PC-3 (cell line): ENCODE measurements at regions of chr1 and their contacts with region 1.

Region 1: DNA sequence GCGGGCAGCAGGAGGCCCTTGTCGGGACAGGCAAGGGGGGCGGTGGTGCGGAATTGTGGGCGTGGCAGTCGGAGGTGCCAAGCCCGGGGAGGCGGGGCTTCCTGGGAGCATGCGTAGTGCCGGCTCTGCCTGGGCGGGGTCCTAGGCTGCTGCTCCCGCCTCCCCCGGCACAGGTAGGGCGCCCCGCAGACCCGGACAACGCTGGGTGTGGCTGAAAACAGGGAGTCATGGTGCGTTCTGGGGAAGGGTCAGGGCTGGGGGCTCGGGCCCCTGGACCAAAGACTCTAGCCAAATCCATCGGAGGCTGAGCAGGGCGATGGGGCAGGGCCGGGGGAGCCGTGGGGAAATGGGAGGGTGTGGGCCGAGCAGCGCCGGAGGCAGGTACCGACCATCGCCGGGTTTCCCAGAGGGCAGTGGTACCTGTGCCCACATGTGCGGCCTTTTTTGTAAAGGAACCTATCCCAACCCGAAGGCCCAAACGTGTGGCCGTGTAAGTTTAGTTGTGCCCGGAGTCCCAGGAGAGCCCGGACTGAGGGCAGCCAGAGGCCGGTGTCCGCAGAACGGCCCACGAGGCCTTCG is 231.9 kb downstream of the SDCCAG8 start:
- DNase-seq: peak; percentile 91
- ATAC-seq: peak; percentile 88
- H3K4me3 ChIP-seq: peak overlapping the region; percentile 78
- H3K27ac ChIP-seq: peak overlapping the region; percentile 3; the same call in 1 of the 2 replicates
- H3K4me1 ChIP-seq: peaks cover 9% of the 10 kb centered on the region
- H3K27me3 ChIP-seq: no peaks in the 10 kb centered on the region
- CTCF ChIP-seq: no peak

Region 2: GRCh38 chr1:243447347-243447746 is 40.4 kb before region 1 on chr1:
- CTCF ChIA-PET with region 1: no interaction called
- POLR2A ChIA-PET with region 1: no interaction called
- intact Hi-C with region 1: loop called (anchors 5 kb)
- DNase-seq: peak; percentile 42
- ATAC-seq: peak; percentile 81
- H3K4me3 ChIP-seq: no peak overlapping the region
- H3K27ac ChIP-seq: no peak overlapping the region
- H3K4me1 ChIP-seq: no peaks in the 10 kb centered on the region
- H3K27me3 ChIP-seq: no peaks in the 10 kb centered on the region
- CTCF ChIP-seq: no peak

Region 3: DNA sequence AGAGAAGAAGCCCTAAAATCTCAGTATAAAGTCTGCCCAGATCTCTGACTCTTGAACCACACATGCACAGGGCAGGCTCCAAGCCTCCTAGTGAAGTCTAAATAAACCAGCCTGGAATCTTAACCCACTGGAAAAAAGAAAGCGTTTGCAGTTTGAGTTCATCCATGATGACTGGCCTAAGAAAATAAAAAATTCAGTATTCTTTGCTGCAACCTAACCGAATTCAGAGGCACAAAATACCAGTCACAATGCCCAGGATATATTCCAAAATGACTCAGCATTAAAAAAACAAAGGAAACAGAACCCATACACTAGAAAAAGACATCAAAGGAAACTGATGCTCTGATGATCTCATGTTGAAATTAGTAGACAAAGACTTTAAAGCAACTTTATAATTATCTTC is 37.3 kb after region 1 on chr1:
- CTCF ChIA-PET with region 1: no interaction called
- POLR2A ChIA-PET with region 1: no interaction called
- intact Hi-C with region 1: loop called (anchors 1 kb)
- DNase-seq: peak; percentile 88
- ATAC-seq: peak; percentile 89
- H3K4me3 ChIP-seq: no peak overlapping the region
- H3K27ac ChIP-seq: peak overlapping the region; percentile 60
- H3K4me1 ChIP-seq: peaks cover 11% of the 10 kb centered on the region
- H3K27me3 ChIP-seq: no peaks in the 10 kb centered on the region
- CTCF ChIP-seq: no peak